Heart right ventricle (tissue), 16 donors: ENCODE measurements at regions of chr22 and their contacts with region 1.

Region 1: DNA sequence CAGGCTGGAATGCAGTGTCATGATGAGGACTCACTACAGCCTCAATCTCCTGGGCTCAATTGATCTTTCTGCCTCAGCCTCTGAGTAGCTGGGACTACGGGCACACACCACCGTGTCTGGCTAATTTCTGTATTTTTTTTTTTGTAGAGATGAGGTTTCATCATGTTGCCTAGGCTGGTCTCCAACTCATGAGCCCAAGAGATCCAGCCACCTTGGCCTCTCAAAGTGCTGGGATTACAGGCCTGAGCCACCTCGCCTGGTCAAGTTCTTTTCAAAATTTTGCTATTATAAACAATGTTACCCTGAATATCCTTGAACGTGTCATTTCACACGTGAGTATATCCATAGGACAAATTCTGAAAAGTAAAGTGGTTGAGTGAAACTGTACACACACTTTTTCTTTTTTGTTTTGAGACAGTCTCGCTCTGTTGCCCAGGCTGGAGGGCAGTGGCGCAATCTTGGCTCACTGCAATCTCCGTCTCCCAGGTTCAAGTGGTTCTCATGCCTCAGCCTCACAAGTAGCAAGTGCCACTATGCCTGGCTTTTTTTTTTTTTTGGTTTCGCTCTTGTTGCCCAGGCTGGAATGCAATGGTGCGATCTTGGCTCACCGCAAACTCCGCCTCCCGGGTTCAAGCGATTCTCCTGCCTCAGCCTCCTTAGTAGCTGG is 21.6 kb upstream of the EP300 start:
- DNase-seq: no peak
- ATAC-seq: no peak
- H3K4me3 ChIP-seq: no peak overlapping the region
- H3K27ac ChIP-seq: no peak overlapping the region
- H3K4me1 ChIP-seq: peaks cover 0 to 20% (median 0%) of the 10 kb centered on the region in 9 donors
- H3K27me3 ChIP-seq: no peaks in the 10 kb centered on the region
- CTCF ChIP-seq: no peak

Region 2: GRCh38 chr22:41009202-41009943 is 61.4 kb before region 1 on chr22:
- intact Hi-C with region 1: loop called in 2 of 10 experiments (anchors 5 to 10 kb)
- DNase-seq: no peak
- ATAC-seq: no peak
- H3K4me3 ChIP-seq: no peak overlapping the region
- H3K27ac ChIP-seq: no peak overlapping the region
- H3K4me1 ChIP-seq: peaks cover 0 to 8% (median 0%) of the 10 kb centered on the region in 9 donors
- H3K27me3 ChIP-seq: no peaks in the 10 kb centered on the region
- CTCF ChIP-seq: no peak